ENCODE measurements at regions of chr2 and their contacts with region 1.

Region 1: DNA sequence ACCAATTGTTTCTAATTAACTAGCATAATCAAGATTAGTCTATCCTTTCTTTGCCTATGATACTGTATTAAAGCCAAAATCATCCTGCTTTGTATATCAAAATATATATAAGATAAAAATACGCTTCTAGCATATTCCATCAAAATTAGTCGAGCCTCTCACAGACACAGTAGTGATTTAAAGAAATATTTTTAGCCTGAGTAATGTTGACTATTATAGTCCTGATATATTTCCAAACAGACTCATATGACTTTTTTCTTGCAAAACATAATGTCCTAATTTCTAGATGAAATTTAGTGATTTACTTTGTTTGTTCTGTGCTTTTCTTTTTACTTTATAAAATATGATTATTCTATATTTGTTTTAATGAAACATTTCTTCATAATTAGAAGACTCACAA is 30.9 kb downstream of the FAP start:
- DNase-seq: peak; percentile 38
- ATAC-seq: peak; percentile 77
- H3K4me3 ChIP-seq: no peak overlapping the region
- H3K27ac ChIP-seq: no peak overlapping the region
- H3K4me1 ChIP-seq: peaks cover 9% of the 10 kb centered on the region; the same call in 1 of the 2 replicates
- H3K27me3 ChIP-seq: no peaks in the 10 kb centered on the region
- CTCF ChIP-seq: no peak

Region 2: DNA sequence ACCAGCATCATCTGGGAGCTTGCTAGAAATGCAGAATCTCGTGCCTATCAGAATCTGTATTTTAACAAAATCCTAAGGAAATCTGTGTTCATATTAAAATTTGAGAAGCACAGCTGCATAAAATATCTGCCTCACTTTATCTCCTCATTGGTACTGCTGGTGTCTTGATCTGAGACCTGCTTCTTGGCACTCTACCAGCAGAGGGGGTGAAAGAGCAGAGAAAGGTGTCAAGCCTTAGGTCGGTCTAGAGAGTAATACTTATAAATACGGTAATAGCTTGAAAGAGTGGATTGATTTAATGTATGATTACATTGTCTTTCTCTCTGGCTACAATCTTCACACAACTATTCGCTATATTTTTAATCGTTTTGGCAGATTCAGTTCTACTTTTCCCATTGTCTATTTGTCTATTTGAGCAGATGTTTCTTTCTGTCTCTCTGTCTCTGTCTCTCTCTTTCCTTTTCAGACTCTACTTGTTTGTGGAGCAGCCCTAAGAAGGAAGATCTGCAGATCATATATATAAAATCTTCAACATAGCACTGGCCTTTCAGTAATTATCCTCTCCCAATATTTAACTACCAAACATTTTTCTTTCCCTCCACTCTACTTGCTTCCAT is 58.6 kb before region 1 on chr2:
- CTCF ChIA-PET with region 1: no interaction called
- POLR2A ChIA-PET with region 1: no interaction called
- intact Hi-C with region 1: loop called (anchors 2 kb)
- DNase-seq: peak; percentile 81
- ATAC-seq: peak; percentile 93
- H3K4me3 ChIP-seq: no peak overlapping the region
- H3K27ac ChIP-seq: no peak overlapping the region
- H3K4me1 ChIP-seq: no peaks in the 10 kb centered on the region
- H3K27me3 ChIP-seq: no peaks in the 10 kb centered on the region
- CTCF ChIP-seq: peak; percentile 87

Region 3: DNA sequence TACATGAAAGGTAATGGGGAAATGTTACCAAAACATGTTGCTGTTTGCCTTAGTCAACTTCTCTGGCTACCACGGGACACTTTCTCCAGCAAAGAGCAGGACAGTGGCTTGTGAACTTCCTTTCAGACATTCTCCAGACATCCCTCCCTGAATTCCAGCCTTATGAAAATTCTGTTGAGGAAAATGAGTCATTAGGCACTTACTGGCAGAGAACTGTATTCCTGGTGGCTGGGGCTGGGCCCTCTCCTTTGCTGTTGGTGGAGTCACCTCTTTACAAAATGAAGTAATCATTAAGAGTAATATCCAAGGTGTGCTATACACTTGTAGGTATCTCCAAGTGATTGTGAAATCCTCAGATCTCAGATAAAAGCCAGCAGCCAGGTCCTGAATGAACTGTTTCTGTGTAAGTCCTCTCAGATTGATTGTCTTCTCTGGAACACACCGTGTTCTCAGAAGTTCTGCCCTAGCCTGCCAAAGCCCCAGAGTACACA is 32.2 kb after region 1 on chr2:
- CTCF ChIA-PET with region 1: no interaction called
- POLR2A ChIA-PET with region 1: no interaction called
- intact Hi-C with region 1: no loop called
- DNase-seq: peak; percentile 91
- ATAC-seq: peak; percentile 92
- H3K4me3 ChIP-seq: no peak overlapping the region
- H3K27ac ChIP-seq: peak overlapping the region; percentile 42
- H3K4me1 ChIP-seq: peaks cover 35% of the 10 kb centered on the region
- H3K27me3 ChIP-seq: no peaks in the 10 kb centered on the region
- CTCF ChIP-seq: no peak